ENCODE measurements at regions of chr21 and their contacts with region 1.

Region 1: GRCh38 chr21:27380303-27380702 is 413.4 kb upstream of the ADAMTS5 start:
- DNase-seq: no peak
- ATAC-seq: no peak
- H3K4me3 ChIP-seq: no peak overlapping the region
- H3K4me3 Mint-ChIP-seq: no peak overlapping the region
- H3K27ac ChIP-seq: no peak overlapping the region
- H3K27ac Mint-ChIP-seq: no peak overlapping the region
- H3K4me1 ChIP-seq: no peaks in the 10 kb centered on the region
- H3K4me1 Mint-ChIP-seq: no peaks in the 10 kb centered on the region
- H3K27me3 ChIP-seq: no peaks in the 10 kb centered on the region
- H3K27me3 Mint-ChIP-seq: no peaks in the 10 kb centered on the region
- CTCF ChIP-seq: no peak

Region 2: GRCh38 chr21:27363719-27364477 is 16.4 kb before region 1 on chr21:
- CTCF ChIA-PET with region 1: no interaction called
- POLR2A ChIA-PET with region 1: no interaction called
- intact Hi-C with region 1: loop called in 1 of 2 experiments (anchors 1 kb)
- DNase-seq: no peak
- ATAC-seq: no peak
- H3K4me3 ChIP-seq: no peak overlapping the region
- H3K4me3 Mint-ChIP-seq: no peak overlapping the region
- H3K27ac ChIP-seq: no peak overlapping the region
- H3K27ac Mint-ChIP-seq: no peak overlapping the region
- H3K4me1 ChIP-seq: no peaks in the 10 kb centered on the region
- H3K4me1 Mint-ChIP-seq: no peaks in the 10 kb centered on the region
- H3K27me3 ChIP-seq: no peaks in the 10 kb centered on the region
- H3K27me3 Mint-ChIP-seq: no peaks in the 10 kb centered on the region
- CTCF ChIP-seq: no peak

Region 3: DNA sequence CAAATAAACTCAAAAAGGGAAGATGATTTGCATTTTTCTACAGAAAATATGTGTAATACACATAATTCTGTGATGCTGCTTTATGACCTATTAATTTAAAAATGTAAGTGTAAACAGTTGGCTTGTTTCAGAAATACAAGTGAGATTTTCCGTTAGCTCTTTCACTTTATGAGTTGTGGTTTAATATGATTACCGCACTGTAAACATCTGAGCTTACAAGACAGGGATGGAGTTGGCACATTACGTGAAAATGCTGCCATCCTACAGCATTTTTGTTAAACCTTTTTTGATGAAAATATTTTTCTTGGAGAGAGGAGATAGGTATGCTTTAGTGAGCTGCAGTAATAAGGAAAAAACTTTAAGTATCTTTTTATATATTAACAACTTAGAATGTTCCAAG is 13.4 kb after region 1 on chr21:
- CTCF ChIA-PET with region 1: no interaction called
- POLR2A ChIA-PET with region 1: no interaction called
- intact Hi-C with region 1: no loop called
- DNase-seq: no peak
- ATAC-seq: no peak
- H3K4me3 ChIP-seq: no peak overlapping the region
- H3K4me3 Mint-ChIP-seq: no peak overlapping the region
- H3K27ac ChIP-seq: no peak overlapping the region
- H3K27ac Mint-ChIP-seq: no peak overlapping the region
- H3K4me1 ChIP-seq: no peaks in the 10 kb centered on the region
- H3K4me1 Mint-ChIP-seq: no peaks in the 10 kb centered on the region
- H3K27me3 ChIP-seq: no peaks in the 10 kb centered on the region
- H3K27me3 Mint-ChIP-seq: no peaks in the 10 kb centered on the region
- CTCF ChIP-seq: no peak